Right ventricle myocardium superior (tissue), 1 donor: ENCODE measurements at regions of chr22 and their contacts with region 1.

Region 1: DNA sequence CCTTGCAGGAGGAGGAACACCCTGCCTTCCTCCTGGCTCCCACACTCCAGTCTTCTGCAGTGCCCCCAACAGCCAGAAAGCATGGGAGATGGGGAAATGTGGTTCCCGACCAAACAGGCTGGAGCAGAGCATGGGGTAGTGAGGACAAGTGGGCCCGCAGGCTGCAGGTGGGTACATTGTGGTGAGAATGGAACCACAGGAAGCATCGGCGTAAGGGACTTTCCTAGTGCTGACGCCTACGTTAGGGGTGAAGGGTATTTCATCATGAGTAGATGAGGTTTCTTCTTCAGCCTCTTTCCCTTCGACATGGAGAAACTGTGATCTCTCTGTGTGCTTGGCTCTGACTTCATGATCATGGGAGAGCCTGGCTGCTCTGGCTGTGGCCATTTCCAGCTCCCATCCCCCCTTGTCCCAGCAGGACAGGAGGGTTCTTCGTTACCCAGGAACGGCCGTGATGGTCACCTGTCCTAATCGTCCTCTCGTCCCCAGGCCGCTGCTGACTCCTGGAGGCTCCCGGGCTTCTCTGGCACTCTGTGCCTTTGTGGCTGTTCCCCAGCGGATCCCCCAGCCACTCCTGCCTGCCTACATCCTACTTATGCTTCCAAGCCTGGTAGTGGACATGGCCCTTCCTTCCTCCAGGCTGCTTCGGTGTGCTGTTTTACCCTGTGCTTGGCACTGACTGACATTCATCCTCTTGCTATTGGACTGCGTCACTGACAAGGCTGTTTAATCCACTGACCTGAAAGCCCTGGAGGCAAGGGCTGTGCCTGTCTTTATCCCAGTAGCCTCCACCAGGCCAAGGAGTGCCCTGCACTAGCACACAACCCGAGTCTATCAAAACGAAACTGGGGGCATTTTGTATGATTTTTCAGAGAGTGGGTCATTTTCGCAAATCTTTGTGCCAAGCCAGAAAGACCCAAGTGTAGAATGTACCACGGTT is 65.2 kb upstream of the CECR2 start:
- DNase-seq: no peak
- ATAC-seq: no peak

Region 2: GRCh38 chr22:17217179-17217578 is 86.9 kb before region 1 on chr22:
- intact Hi-C with region 1: no loop called
- DNase-seq: no peak
- ATAC-seq: no peak

Region 3: DNA sequence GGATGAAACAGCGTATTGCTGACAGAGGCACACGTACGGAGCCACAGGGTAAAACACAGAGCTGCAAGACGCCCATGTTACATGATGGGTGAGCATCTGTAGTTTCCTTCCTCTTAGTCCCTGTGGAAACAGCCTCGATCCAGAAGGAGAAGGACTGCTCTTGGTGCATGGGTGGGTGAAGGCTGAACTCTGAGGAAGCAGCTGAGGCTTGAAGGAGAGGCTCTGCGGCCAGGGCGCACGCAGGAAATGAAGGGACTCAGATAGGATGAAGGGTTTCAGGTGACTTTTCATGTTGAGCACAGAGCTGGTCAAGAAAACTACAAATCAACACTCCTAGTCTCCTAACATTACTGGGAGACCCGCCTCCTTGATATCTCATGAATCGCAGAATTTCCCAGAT is 19.2 kb before region 1 on chr22:
- intact Hi-C with region 1: loop called (anchors 2 kb)
- DNase-seq: no peak
- ATAC-seq: no peak